HEK293T (cell line): ENCODE measurements at regions of chr10 and their contacts with region 1.

Region 1: DNA sequence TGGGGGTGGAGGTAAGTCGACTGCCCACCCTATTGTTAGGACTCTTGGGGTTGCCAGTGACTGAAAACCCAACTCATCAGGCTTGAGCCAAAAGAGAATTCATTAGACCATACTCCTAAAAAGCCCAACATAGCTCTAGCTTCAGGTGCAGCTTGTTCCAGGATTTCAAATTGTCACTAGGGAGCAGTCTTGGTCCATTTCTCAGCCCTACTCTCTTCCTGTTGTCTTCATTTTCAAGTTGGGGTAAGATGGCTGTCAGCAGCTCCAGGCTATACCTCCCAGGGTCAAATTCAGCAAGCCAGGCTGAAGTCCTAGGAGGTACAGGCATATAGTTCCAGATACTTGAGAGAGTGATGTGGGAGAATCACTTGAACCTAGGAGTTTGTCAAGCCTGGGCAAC is 14.9 kb upstream of the COL13A1 start:
- DNase-seq: peak; percentile 27

Region 2: DNA sequence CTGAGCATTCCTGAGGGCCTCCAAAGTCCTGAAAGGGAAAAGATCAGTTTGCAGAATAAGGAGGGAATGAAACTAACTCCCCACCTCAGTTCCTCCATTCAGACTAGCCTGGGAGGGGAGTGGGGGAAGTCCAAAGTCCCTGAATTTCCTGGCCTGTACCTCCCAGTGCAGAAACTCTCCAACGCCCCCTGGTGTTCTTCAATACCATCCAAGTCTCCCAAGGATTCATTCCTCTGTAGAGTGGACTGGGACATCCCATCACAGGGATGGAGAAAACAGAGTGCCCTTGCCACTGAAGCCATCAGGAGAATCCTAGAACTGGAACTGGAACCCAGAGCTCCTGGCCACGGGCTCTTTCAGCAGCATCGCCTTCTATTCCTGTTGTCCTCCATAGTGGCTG is 13.3 kb after region 1 on chr10:
- CTCF ChIA-PET with region 1: interaction called, 33 read pairs
- POLR2A ChIA-PET with region 1: no interaction called
- DNase-seq: peak; percentile 72

Region 3: DNA sequence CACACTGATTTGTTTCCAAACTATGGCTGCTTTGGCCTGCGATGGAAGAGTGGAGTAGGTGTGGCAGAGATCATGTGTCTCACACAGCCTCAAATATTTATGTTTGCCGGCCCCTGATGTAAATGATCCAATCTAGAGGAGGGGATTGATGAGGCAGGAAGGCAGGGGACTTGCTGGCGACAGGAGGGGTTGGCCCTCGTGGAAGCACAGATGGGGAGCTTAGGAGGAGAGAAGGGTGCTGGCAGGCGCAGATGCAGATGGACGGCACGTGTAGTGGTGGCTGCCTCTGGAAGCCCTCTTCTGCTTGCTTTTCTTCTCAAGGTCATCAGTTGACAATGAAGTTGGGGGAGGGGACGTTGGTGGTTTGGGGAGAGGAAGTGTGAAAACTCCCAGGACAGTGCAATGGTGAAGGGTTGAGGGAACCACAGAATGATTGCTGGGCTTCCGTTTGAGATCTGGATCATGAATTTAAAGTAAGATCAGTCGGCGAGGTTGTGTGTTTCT is 30.3 kb after region 1 on chr10:
- CTCF ChIA-PET with region 1: no interaction called
- POLR2A ChIA-PET with region 1: no interaction called
- DNase-seq: no peak

Region 4: DNA sequence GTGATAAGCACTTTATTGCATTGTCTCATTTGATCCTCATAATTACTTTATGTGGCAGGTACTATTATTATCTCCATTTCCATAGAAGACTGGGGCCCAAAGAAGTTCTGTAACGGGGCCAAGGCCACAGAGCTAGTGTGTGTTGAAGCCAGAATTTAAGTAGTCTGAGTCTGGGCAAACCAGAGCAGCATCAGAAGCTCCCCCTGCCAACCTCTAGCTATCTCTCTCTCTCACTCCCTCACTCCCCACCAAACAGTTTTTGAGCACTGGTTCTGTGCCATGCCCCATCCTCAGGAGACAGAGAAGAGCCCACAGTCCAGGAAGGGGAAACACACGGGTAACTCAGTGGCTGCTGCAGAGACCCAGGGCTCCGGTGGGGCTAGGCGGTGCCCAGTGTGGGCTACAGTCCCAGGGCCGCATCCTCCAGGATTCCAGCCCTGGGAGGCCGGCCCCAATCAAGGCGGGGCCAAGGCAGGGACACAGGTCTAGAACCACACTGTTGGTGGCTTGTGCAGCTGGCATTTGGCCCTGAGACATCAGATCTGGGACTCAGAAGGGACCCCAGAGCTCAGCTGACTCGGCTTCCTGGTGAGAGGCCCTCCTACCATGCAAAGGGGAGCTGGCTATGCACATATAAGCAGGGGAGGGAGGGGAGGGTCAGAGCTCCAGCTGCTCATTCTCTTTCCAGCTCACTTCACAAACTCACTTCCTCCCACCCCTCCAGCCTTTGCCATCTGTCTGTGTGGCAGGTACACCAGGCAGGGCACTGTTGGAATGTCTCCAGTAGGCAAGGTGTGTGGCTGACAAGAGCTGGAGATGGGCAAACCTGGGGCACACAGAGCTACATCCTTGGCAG is 49.3 kb after region 1 on chr10:
- CTCF ChIA-PET with region 1: no interaction called
- POLR2A ChIA-PET with region 1: no interaction called
- DNase-seq: no peak

Region 5: GRCh38 chr10:69957886-69958555 is 171.2 kb after region 1 on chr10:
- CTCF ChIA-PET with region 1: interaction called, 12 read pairs
- POLR2A ChIA-PET with region 1: no interaction called
- DNase-seq: peak; percentile 78